ENCODE measurements at regions of chr7 and their contacts with region 1.

Region 1: GRCh38 chr7:29239638-29240037 is 45.1 kb downstream of the CHN2 start:
- DNase-seq: peak; percentile 13 to 58
- H3K4me3 ChIP-seq: no peak overlapping the region
- H3K27ac ChIP-seq: no peak overlapping the region
- H3K4me1 ChIP-seq: peaks cover 0 to 3% (median 1%) of the 10 kb centered on the region in 4 experiments; a peak in 2 of 7 replicates
- H3K27me3 ChIP-seq: no peaks in the 10 kb centered on the region
- CTCF ChIP-seq: peak; percentile 65 to 85 (median 82)
- EP300 ChIP-seq: no peak
- POLR2A ChIP-seq: no peak
- RAD21 ChIP-seq: peak; percentile 61 to 72

Region 2: GRCh38 chr7:29204491-29205272 is 35.0 kb before region 1 on chr7:
- CTCF ChIA-PET with region 1: interaction called, 15 read pairs
- POLR2A ChIA-PET with region 1: interaction called, 6 read pairs
- DNase-seq: no peak
- H3K4me3 ChIP-seq: no peak overlapping the region
- H3K27ac ChIP-seq: no peak overlapping the region
- H3K4me1 ChIP-seq: peaks cover 0 to 5% (median 0%) of the 10 kb centered on the region in 4 experiments; a peak in 2 of 7 replicates
- H3K27me3 ChIP-seq: no peaks in the 10 kb centered on the region; a peak in 1 of 7 replicates
- CTCF ChIP-seq: no peak
- EP300 ChIP-seq: no peak
- POLR2A ChIP-seq: no peak
- RAD21 ChIP-seq: no peak

Region 3: DNA sequence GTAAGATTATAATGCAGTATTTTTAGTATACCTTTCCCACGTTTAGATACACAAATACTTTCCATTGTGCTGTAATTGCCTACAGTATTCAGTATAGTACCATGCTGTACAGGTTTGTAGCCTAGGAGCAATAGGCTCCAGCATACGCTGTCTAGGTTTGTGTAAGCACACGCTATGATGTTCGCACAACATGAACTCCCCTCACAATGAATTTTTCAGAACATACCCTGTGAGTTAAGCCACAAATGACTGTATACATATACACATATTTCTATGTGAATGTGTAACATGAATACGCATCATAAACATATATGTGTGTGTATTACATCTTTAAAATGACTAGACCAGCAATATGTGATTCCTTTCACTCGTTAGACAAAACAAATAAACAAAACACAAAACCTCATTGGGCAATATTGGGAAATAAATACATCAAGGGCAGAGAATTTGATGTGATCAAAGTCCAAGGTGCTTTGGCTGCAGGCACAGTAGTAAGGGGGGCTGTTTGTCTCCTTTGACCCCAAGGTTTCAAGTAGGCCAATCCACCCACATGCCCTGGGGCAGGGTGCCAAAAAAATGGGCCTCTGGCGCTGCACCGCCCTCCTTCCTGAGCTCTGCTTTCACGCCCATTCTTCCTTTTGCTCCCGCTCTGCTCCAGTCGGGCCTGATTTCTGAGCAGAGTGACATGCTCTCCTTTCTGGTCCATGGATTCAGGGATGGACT is 11.2 kb before region 1 on chr7:
- CTCF ChIA-PET with region 1: interaction called, 24 read pairs
- POLR2A ChIA-PET with region 1: interaction called, 3 read pairs
- DNase-seq: no peak
- H3K4me3 ChIP-seq: no peak overlapping the region
- H3K27ac ChIP-seq: no peak overlapping the region
- H3K4me1 ChIP-seq: no peaks in the 10 kb centered on the region; a peak in 1 of 7 replicates
- H3K27me3 ChIP-seq: no peaks in the 10 kb centered on the region
- CTCF ChIP-seq: no peak
- EP300 ChIP-seq: no peak
- POLR2A ChIP-seq: no peak
- RAD21 ChIP-seq: no peak

Region 4: DNA sequence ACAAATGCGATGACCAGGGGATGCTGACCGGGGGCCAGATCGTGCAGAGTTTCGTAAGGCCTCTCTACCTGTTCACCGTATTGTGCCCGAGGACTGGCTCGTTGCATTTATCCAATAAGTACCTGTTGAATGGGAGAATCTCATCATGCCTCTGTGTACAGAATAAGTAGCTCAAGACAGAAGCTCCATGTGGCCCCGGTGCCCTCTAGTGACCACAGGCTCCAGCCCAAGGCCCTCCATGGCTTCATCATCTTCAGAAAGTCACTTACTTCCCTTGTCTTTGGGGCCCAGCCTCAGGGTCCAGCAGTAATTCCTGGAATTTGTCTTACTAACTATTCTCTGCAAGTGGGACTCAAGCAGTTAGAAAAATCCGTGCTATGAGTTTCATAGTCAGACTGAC is 106.0 kb after region 1 on chr7:
- CTCF ChIA-PET with region 1: interaction called, 13 read pairs
- POLR2A ChIA-PET with region 1: no interaction called
- DNase-seq: peak; percentile 44 to 66
- H3K4me3 ChIP-seq: no peak overlapping the region
- H3K27ac ChIP-seq: no peak overlapping the region
- H3K4me1 ChIP-seq: no peaks in the 10 kb centered on the region; a peak in 1 of 7 replicates
- H3K27me3 ChIP-seq: no peaks in the 10 kb centered on the region
- CTCF ChIP-seq: peak; percentile 64 to 83 (median 77)
- EP300 ChIP-seq: no peak
- POLR2A ChIP-seq: no peak
- RAD21 ChIP-seq: peak; percentile 90 to 92

Region 5: DNA sequence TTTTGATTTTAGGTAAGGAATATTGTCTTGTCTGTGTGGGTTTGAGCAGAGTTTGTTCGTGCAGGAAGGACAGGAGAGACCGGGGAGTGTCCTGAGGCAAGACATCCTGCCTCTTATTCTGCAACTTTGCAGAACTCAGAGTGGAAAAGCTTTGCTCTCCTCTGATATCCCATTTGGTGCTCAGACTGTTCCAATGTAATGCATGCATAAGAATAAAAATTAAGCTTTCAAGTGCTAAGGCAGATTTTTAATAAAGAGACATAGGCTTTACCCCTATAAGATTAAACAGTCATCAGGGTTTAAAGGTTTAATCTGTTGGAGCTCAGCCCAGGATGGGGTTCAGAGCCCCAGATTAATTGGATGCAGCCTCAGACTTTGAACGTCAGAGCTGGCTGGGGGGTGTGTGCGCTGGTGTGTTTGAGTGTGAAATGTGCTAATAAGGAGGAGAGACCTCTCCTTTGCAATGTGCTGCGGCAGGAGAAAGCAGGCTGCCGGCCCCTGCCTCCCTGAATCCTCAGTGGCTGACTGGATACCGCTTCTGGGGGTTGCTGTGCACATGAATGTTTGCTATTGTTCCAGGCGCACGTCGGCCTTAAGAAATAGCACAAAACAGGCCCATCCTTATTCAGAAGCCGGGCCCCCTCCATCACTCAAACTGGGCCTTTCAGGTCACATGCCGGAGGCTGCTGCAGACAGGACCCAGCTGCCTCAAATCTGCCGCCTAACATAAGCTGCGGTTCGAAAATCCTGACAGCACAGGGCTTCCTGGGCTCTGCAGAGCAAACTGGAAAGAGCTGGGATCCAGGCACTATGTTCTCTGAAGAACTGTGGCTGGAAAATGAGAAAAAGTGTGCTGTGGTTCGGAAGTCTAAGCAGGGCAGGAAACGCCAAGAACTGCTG is 239.9 kb after region 1 on chr7:
- CTCF ChIA-PET with region 1: no interaction called
- POLR2A ChIA-PET with region 1: no interaction called
- DNase-seq: no peak
- H3K4me3 ChIP-seq: no peak overlapping the region
- H3K27ac ChIP-seq: no peak overlapping the region
- H3K4me1 ChIP-seq: peaks cover 0 to 4% (median 0%) of the 10 kb centered on the region in 4 experiments; a peak in 1 of 7 replicates
- H3K27me3 ChIP-seq: no peaks in the 10 kb centered on the region
- CTCF ChIP-seq: no peak
- EP300 ChIP-seq: no peak
- POLR2A ChIP-seq: no peak
- RAD21 ChIP-seq: no peak

Measured in H1 (cell line).